HEK293 (cell line): ENCODE measurements at regions of chr9 and their contacts with region 1.

Region 1: GRCh38 chr9:136671646-136672430 is 9.1 kb downstream of the EGFL7 start:
- H3K4me3 ChIP-seq: no peak overlapping the region
- H3K27ac ChIP-seq: no peak overlapping the region
- H3K4me1 ChIP-seq: no peaks in the 10 kb centered on the region
- CTCF ChIP-seq: peak; percentile 88

Region 2: GRCh38 chr9:136686794-136687711 is 15.2 kb after region 1 on chr9 and contains the start of gene AGPAT2:
- CTCF ChIA-PET with region 1: interaction called, 60 read pairs
- POLR2A ChIA-PET with region 1: interaction called, 19 read pairs
- H3K4me3 ChIP-seq: peak within 1 kb of the TSS; percentile 71
- H3K27ac ChIP-seq: peak within 1 kb of the TSS; percentile 74; the same call in 1 of the 2 replicates
- H3K4me1 ChIP-seq: peaks cover 5% of the 10 kb centered on the region
- CTCF ChIP-seq: peak; percentile 45; the same call in 1 of the 2 replicates

Region 3: DNA sequence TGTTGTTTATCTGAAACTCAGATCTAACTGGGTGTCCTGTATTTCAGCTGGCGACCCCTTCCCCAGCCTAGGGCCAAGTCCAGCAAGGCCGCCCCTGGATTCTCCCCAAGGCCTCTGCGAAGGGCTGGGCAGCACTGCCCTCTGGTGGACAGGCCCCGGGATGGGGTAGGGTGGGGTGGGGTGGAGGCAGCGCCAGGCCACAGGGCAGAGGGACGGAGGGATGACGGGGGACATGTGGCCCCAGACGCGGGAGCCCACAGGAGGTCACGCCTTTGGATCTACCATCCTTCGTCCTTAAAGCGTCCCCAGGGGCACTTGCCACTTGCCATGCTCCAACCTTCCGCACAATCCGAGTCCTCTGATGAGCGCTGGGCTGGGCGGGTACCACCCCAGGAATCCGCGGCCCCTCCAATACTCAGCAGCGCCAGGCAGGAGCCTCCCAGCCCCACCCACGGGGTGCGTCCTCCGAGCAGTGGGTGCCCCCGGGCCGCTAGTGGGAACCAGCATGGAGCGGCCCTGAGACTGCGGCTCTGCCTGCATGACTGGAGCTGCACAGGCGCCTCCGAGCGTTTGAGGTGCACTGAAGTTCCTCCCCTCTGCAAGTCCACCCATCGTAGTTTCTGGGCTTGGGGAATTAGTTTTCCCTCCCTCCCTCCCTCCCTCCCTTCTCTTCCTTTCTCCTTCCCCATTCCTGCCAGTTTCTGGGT is 22.6 kb after region 1 on chr9:
- CTCF ChIA-PET with region 1: interaction called, 24 read pairs
- POLR2A ChIA-PET with region 1: interaction called, 4 read pairs
- H3K4me3 ChIP-seq: no peak overlapping the region
- H3K27ac ChIP-seq: no peak overlapping the region
- H3K4me1 ChIP-seq: no peaks in the 10 kb centered on the region
- CTCF ChIP-seq: peak; percentile 69